ENCODE measurements at regions of chr16 and their contacts with region 1.

Region 1: GRCh38 chr16:10918294-10919002 is 23.8 kb downstream of the DEXI start:
- DNase-seq: peak; percentile 73 to 96 (median 90)

Region 2: DNA sequence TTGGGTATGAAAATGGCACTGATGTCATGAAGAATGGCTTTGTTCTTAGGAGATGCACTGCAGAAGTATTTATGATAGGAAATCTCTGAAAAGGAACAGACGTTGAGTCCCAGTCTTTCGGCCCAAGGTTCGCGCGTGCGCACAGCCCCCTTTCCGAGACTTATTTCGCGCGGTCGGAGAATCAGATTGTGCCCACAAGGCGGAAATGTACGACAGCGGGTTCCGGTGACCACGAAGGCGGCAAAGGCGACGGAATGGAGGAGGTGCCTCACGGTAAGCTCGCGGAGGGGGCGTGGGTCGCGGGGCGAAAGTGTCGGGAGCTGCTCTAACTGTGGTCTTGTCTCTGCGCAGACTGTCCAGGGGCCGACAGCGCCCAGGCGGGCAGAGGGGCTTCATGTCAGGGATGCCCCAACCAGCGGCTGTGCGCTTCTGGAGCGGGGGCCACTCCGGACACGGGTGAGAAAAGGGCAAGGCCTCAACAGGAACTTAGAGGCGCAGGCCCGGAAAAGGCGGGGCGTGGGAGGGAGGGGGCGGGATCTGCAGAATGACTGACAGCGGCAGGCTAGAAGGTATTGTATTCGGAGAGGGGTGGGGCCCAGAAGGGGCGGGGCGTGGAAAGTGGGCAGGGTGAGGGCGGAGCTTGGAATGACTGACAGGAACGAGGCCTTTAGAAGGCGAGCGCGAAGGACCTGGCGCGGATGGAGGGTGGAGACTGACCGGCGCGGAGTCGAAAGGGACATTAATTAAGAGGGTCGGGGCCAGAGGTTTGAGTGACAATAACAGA is 174.6 kb before region 1 on chr16 and contains the start of gene NUBP1:
- intact Hi-C with region 1: loop called (anchors 5 kb)
- DNase-seq: peak; percentile 99 to 100 (median 100)

Region 3: DNA sequence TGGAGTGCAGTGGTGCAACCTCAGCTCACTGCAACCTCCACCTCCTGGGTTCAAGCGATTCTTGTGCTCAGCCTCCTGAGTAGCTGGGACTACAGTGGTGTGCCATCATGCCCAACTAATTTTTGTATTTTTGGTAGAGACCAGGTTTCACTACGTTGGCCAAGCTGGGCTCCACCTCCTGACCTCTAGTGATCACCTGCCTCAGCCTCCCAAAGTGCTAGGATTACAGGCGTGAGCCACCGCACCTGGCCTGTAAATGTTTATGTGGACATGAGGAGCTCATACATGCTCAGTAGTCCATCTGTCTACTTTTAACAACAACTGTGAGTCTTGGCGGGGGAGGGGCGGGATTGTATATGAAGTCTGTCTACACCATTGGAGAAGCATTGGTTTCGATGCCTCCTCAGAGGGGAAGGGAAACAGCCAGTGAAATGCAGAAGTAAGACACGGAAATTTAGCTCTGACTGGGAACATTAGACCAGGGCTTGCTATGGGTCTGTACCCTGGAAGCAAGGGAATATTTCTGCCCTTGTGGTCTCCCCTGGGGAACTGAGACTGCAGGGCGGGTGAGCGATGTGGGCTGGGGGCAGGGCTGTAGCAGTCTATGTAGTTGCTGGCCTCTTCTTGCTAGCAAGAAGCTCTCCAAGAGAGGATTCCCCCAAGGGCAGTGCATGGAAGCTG is 165.5 kb before region 1 on chr16:
- intact Hi-C with region 1: loop called (anchors 5 kb)
- DNase-seq: peak in 4 of 10 donors; percentile 15 to 87 (median 60)

Region 4: GRCh38 chr16:10876799-10877341 is 41.6 kb before region 1 on chr16 and contains the start of gene CIITA:
- intact Hi-C with region 1: no loop called
- DNase-seq: peak in 7 of 10 donors; percentile 44 to 92 (median 59)